ENCODE measurements at regions of chr2 and their contacts with region 1.

Region 1: DNA sequence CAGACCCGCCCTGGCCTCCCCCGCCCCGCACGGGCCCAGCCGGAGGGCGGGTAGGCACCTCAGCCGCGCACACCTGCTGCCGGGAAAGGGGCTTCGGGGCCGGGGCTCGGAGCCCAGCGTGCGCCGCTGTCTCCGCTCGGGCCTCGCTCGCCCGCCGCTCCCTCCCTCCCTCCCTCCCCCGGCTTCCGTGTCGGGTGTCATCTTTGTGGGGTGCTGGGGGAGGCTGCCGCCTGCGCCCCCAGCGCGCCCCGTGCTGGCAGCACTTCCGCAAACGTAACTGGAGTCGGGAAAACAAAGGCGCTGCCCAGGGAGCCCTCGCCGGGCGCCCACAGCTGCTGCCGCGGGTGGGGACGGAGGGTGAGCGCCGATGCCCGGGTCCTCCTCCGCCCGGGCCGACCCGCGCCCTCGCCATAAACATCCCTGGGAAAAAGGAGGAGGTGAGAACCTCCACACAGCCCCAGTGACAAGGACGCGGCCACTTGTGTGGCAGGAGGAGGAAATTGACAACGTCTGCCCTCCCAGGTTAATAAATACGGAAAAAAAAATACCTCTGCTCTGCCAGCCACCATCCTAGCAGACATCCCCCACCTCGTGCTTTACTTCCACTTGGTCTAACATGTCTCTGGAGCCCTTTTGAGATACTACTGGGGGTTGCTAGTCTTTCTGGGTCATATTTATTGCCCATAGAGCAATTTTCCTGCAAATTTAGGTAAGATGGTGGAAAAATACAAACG is 550 bp downstream of the MFSD6 start:
- DNase-seq: peak; percentile 82
- ATAC-seq: peak; percentile 50
- H3K4me3 Mint-ChIP-seq: peak overlapping the region; percentile 81
- H3K27ac Mint-ChIP-seq: peak overlapping the region; percentile 90
- H3K4me1 Mint-ChIP-seq: peaks cover 45% of the 10 kb centered on the region
- H3K27me3 Mint-ChIP-seq: no peaks in the 10 kb centered on the region

Region 2: DNA sequence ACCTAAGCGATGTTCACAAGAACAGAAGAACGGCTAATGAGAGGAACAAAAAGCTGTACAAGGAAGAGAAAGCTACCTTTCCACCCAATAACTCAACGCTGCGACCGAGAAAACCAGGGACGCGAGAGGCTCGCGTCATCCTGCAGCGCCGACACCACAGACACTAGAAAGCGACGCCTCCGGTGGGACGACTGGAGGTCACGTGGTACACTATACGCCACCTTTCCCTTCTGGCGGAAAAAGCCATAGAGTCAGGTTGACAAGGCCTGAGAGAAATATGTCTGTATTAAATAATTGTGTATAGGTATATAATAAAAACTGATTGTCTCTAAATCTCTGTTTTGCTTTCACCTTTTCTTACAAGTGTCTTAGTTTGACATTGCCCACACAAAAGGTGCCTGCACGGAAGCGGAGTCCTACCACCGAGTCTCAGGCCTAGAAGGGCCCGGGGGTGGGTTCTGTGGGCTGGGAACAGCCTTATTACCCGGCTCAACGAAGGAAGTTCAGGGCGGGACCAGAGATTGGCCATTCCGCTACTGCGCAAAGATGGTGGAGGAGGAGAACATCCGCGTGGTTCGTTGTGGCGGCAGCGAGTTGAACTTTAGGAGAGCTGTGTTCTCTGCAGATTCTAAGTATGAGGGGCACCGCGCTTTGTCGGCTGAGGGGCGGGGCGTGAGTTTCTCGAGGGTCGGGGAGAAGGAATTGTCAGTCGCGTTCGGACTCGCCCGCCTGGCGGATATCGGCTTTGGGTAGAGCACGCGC is 967.6 kb before region 1 on chr2 and contains the start of gene WDR75:
- CTCF ChIA-PET with region 1: no interaction called
- POLR2A ChIA-PET with region 1: no interaction called
- intact Hi-C with region 1: loop called in 1 of 2 experiments (anchors 10 kb)
- DNase-seq: peak; percentile 95
- ATAC-seq: peak; percentile 91
- H3K4me3 Mint-ChIP-seq: no peak within 1 kb of the TSS
- H3K27ac Mint-ChIP-seq: peak within 1 kb of the TSS; percentile 99
- H3K4me1 Mint-ChIP-seq: peaks cover 20% of the 10 kb centered on the region
- H3K27me3 Mint-ChIP-seq: no peaks in the 10 kb centered on the region
- total RNA-seq, gene WDR75: 82.1 to 82.3 TPM

Region 3: GRCh38 chr2:189751080-189751658 is 657.5 kb before region 1 on chr2:
- CTCF ChIA-PET with region 1: no interaction called
- POLR2A ChIA-PET with region 1: no interaction called
- intact Hi-C with region 1: no loop called
- DNase-seq: peak; percentile 57
- ATAC-seq: peak; percentile 71
- H3K4me3 Mint-ChIP-seq: no peak overlapping the region
- H3K27ac Mint-ChIP-seq: no peak overlapping the region
- H3K4me1 Mint-ChIP-seq: no peaks in the 10 kb centered on the region
- H3K27me3 Mint-ChIP-seq: no peaks in the 10 kb centered on the region

Region 4: GRCh38 chr2:190319555-190320498 is 88.9 kb before region 1 on chr2 and contains the start of gene HIBCH:
- CTCF ChIA-PET with region 1: no interaction called
- POLR2A ChIA-PET with region 1: no interaction called
- intact Hi-C with region 1: loop called (anchors 1 to 5 kb)
- DNase-seq: peak; percentile 95
- ATAC-seq: peak; percentile 87
- H3K4me3 Mint-ChIP-seq: peak within 1 kb of the TSS; percentile 85
- H3K27ac Mint-ChIP-seq: peak within 1 kb of the TSS; percentile 93
- H3K4me1 Mint-ChIP-seq: peaks cover 59% of the 10 kb centered on the region
- H3K27me3 Mint-ChIP-seq: no peaks in the 10 kb centered on the region
- total RNA-seq, gene HIBCH: 23.1 to 23.7 TPM

Region 5: GRCh38 chr2:190369635-190370034 is 39.1 kb before region 1 on chr2:
- CTCF ChIA-PET with region 1: no interaction called
- POLR2A ChIA-PET with region 1: no interaction called
- intact Hi-C with region 1: no loop called
- DNase-seq: no peak
- ATAC-seq: no peak
- H3K4me3 Mint-ChIP-seq: no peak overlapping the region
- H3K27ac Mint-ChIP-seq: no peak overlapping the region
- H3K4me1 Mint-ChIP-seq: no peaks in the 10 kb centered on the region
- H3K27me3 Mint-ChIP-seq: no peaks in the 10 kb centered on the region

Region 6: DNA sequence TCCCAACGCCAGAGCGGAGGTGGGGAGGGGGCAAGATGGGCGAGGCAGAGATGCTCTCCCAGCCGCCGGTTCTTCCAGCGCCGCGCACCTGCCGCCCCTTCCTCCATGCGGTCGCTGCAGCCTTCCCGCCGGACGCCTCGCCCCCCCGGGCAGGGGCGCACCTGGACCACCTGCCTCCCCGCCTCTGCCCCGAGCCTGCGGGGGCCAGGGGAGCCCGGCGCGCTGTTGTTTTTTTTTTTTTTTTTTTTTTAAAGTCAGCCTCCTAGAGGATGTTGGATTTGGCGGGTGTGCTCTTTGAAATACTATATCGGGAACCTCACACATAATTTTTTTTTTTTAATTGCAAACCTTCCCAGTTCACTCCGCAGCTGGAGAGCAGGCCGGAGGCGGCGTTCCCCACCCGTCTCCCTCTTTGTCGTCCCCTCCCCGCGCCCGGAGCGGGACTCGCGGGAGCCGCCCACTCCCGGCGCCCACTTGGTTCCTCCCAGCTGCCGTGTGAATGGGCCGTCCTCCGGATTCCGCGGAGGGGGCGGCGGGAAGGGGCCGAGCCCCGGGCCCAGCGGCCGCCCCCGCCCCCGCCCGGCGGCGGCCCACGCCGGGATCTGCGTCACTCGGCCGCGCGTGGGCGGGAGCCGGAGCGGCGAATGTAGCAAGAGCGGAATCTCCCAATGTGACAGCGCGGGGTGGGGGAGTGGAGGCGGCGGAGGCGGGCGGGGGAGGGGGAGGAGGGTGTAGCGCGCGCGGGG is 239.8 kb after region 1 on chr2:
- CTCF ChIA-PET with region 1: no interaction called
- POLR2A ChIA-PET with region 1: no interaction called
- intact Hi-C with region 1: loop called (anchors 1 to 5 kb)
- DNase-seq: peak; percentile 88
- ATAC-seq: peak; percentile 54
- H3K4me3 Mint-ChIP-seq: peak overlapping the region; percentile 67
- H3K27ac Mint-ChIP-seq: peak overlapping the region; percentile 81
- H3K4me1 Mint-ChIP-seq: peaks cover 46% of the 10 kb centered on the region
- H3K27me3 Mint-ChIP-seq: no peaks in the 10 kb centered on the region

Region 7: DNA sequence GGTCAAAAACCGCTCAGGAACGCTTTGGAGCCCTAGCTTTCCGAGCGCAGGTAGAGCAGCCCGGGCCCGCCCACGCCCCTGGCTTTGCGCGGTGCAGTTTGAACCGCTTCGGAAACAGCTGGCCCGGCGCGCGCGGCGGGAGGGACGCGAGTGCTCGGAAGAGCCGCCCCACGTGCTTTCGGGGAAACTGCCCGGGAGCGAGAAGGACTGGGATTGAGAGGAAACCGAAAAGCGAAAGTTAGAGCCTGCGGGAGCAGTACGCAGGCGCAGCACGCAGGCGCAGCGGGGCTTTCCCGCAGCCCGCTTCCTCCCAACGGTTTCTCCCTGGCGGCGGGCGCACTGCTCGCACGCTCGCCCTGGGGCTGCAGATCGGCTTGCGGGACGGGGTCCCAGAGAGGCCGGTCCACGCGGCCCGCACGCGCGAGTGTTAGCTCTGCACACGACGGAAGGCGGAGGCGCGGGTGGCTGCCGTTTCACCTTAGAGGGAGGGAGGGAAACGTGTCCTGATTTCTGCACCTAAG is 611.6 kb after region 1 on chr2:
- CTCF ChIA-PET with region 1: no interaction called
- POLR2A ChIA-PET with region 1: no interaction called
- intact Hi-C with region 1: loop called (anchors 10 kb)
- DNase-seq: peak; percentile 96
- ATAC-seq: peak; percentile 62
- H3K4me3 Mint-ChIP-seq: no peak overlapping the region
- H3K27ac Mint-ChIP-seq: no peak overlapping the region
- H3K4me1 Mint-ChIP-seq: peaks cover 37% of the 10 kb centered on the region
- H3K27me3 Mint-ChIP-seq: no peaks in the 10 kb centered on the region

Measured in activated CD4-positive, alpha-beta T cell treated with anti-CD3 and anti-CD28 coated beads for 36 hours (primary cell).